WTC11 (cell line): ENCODE measurements at regions of chr1 and their contacts with region 1.

Region 1: GRCh38 chr1:156383023-156383422 is 14.0 kb downstream of the RHBG start:
- DNase-seq: peak; percentile 92
- ATAC-seq: peak; percentile 95
- H3K4me3 Mint-ChIP-seq: no peak overlapping the region
- H3K27ac Mint-ChIP-seq: no peak overlapping the region
- H3K4me1 Mint-ChIP-seq: peaks cover 21% of the 10 kb centered on the region
- H3K27me3 Mint-ChIP-seq: peaks cover 24% of the 10 kb centered on the region
- CTCF ChIP-seq: peak; percentile 87

Region 2: GRCh38 chr1:156308078-156308477 is 74.9 kb before region 1 on chr1:
- CTCF ChIA-PET with region 1: no interaction called
- POLR2A ChIA-PET with region 1: no interaction called
- DNase-seq: no peak
- ATAC-seq: no peak
- H3K4me3 Mint-ChIP-seq: no peak overlapping the region
- H3K27ac Mint-ChIP-seq: no peak overlapping the region
- H3K4me1 Mint-ChIP-seq: no peaks in the 10 kb centered on the region
- H3K27me3 Mint-ChIP-seq: no peaks in the 10 kb centered on the region
- CTCF ChIP-seq: no peak

Region 3: DNA sequence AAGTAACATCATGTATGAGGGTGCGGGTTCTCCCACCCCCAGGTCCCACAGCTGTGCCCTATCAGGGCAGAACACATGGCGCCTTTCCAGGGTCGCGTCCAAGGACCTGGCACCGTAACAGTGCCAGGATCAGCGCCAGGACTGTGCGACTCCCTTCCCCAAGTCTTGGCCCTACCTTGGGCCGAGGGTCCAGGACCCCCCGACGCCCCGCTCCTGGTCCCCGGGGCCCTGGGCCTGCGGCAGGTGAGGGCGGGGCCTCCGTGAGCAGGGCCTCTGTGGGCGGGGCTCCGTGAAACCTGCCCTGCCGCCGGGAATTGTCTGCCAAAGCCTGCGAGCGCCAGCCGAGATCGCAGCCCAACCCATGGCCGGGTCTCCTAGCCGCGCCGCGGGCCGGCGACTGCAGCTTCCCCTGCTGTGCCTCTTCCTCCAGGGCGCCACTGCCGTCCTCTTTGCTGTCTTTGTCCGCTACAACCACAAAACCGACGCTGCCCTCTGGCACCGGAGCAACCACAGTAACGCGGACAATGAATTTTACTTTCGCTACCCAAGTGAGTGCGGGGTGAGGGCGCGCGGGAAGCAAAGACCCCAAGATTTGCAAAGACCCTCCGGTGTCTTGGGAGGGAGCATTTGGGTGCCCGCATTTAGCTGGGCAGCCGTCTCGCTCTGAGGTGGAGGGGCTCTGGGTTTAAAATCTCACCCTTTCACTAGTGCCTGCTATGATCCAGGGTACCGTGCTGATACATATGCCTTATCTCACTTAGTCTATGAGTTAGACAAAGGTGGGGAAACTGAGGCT is 13.9 kb before region 1 on chr1 and contains the start of gene RHBG:
- CTCF ChIA-PET with region 1: interaction called, 79 read pairs
- POLR2A ChIA-PET with region 1: no interaction called
- DNase-seq: peak; percentile 86
- ATAC-seq: peak; percentile 90
- H3K4me3 Mint-ChIP-seq: peak within 1 kb of the TSS; percentile 84
- H3K27ac Mint-ChIP-seq: no peak within 1 kb of the TSS
- H3K4me1 Mint-ChIP-seq: peaks cover 21% of the 10 kb centered on the region
- H3K27me3 Mint-ChIP-seq: peaks cover 35% of the 10 kb centered on the region
- CTCF ChIP-seq: no peak
- total RNA-seq, gene RHBG: 1.7 to 2.3 TPM (median 1.9 TPM) in 3 replicates

Region 4: GRCh38 chr1:156407344-156407743 is 24.3 kb after region 1 on chr1:
- CTCF ChIA-PET with region 1: interaction called, 252 read pairs
- POLR2A ChIA-PET with region 1: interaction called, 4 read pairs
- DNase-seq: no peak
- ATAC-seq: peak; percentile 72
- H3K4me3 Mint-ChIP-seq: no peak overlapping the region
- H3K27ac Mint-ChIP-seq: no peak overlapping the region
- H3K4me1 Mint-ChIP-seq: peaks cover 6% of the 10 kb centered on the region
- H3K27me3 Mint-ChIP-seq: peaks cover 8% of the 10 kb centered on the region; the same call in 1 of the 2 replicates
- CTCF ChIP-seq: no peak

Region 5: GRCh38 chr1:156435545-156436141 is 52.6 kb after region 1 on chr1:
- CTCF ChIA-PET with region 1: interaction called, 200 read pairs
- POLR2A ChIA-PET with region 1: no interaction called
- DNase-seq: no peak
- ATAC-seq: no peak
- H3K4me3 Mint-ChIP-seq: peak overlapping the region; percentile 66
- H3K27ac Mint-ChIP-seq: no peak overlapping the region
- H3K4me1 Mint-ChIP-seq: peaks cover 71% of the 10 kb centered on the region
- H3K27me3 Mint-ChIP-seq: peaks cover 100% of the 10 kb centered on the region
- CTCF ChIP-seq: no peak

Region 6: GRCh38 chr1:156456622-156457465 is 73.8 kb after region 1 on chr1:
- CTCF ChIA-PET with region 1: interaction called, 43 read pairs
- POLR2A ChIA-PET with region 1: no interaction called
- DNase-seq: peak; percentile 97
- ATAC-seq: peak; percentile 84
- H3K4me3 Mint-ChIP-seq: peak overlapping the region; percentile 89
- H3K27ac Mint-ChIP-seq: peak overlapping the region; percentile 99
- H3K4me1 Mint-ChIP-seq: peaks cover 15% of the 10 kb centered on the region
- H3K27me3 Mint-ChIP-seq: no peaks in the 10 kb centered on the region
- CTCF ChIP-seq: no peak

Region 7: DNA sequence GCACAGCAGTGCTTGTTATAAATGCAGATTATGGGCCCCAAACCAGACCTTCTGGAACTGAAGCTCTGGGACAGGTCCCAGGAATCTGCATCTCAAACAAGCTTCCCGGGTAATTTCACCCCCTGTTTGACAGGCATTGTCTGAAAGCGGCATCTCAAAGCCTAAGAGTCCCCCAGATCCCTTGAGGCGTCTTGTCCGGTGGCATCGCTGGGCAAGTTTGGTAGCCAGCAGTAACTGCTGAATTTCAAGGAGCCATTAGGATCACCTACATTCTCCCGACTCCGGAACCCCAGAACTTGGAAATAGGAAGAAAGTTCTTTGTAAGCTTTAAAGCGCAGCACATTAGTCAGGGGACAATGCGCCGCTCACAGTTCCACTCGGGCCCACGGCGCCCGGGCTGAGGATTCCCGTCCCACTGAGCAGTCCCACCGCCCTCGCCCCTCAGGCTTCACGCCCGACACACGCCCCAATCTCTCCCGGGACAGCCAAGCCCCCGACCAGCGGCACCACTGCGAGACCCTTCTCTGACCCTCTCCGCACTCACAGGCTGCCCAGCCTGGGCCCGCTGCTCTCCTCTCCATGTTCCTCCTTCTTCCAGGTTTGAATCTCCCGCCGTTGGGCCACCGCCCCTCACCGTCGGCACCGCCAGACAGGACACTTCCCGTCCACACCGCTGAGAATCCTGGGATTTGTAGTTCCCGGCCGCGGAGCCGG is 189.1 kb after region 1 on chr1 and contains the start of gene IQGAP3:
- CTCF ChIA-PET with region 1: no interaction called
- POLR2A ChIA-PET with region 1: no interaction called
- DNase-seq: peak; percentile 95
- ATAC-seq: peak; percentile 98
- H3K4me3 Mint-ChIP-seq: peak within 1 kb of the TSS; percentile 99
- H3K27ac Mint-ChIP-seq: peak within 1 kb of the TSS; percentile 61; the same call in 1 of the 2 replicates
- H3K4me1 Mint-ChIP-seq: peaks cover 15% of the 10 kb centered on the region
- H3K27me3 Mint-ChIP-seq: no peaks in the 10 kb centered on the region; the same call in 1 of the 2 replicates
- CTCF ChIP-seq: no peak
- total RNA-seq, gene IQGAP3: 30.8 to 33.3 TPM (median 33.3 TPM) in 3 replicates